Panc1 (cell line): ENCODE measurements at regions of chr10 and their contacts with region 1.

Region 1: GRCh38 chr10:123559066-123559822 is 106.9 kb upstream of the GPR26 start:
- DNase-seq: peak; percentile 54
- ATAC-seq: peak; percentile 94
- H3K4me3 ChIP-seq: no peak overlapping the region
- H3K27ac ChIP-seq: no peak overlapping the region
- H3K4me1 ChIP-seq: no peaks in the 10 kb centered on the region
- H3K27me3 ChIP-seq: peaks cover 7% of the 10 kb centered on the region; the same call in 1 of the 2 replicates
- CTCF ChIP-seq: peak; percentile 98

Region 2: GRCh38 chr10:123043409-123043925 is 515.8 kb before region 1 on chr10:
- CTCF ChIA-PET with region 1: interaction called, 3 read pairs
- POLR2A ChIA-PET with region 1: no interaction called
- in situ Hi-C with region 1: no loop called
- intact Hi-C with region 1: loop called (anchors 1 kb)
- DNase-seq: peak; percentile 65
- ATAC-seq: peak; percentile 98
- H3K4me3 ChIP-seq: no peak overlapping the region
- H3K27ac ChIP-seq: no peak overlapping the region
- H3K4me1 ChIP-seq: no peaks in the 10 kb centered on the region
- H3K27me3 ChIP-seq: no peaks in the 10 kb centered on the region
- CTCF ChIP-seq: peak; percentile 93

Region 3: DNA sequence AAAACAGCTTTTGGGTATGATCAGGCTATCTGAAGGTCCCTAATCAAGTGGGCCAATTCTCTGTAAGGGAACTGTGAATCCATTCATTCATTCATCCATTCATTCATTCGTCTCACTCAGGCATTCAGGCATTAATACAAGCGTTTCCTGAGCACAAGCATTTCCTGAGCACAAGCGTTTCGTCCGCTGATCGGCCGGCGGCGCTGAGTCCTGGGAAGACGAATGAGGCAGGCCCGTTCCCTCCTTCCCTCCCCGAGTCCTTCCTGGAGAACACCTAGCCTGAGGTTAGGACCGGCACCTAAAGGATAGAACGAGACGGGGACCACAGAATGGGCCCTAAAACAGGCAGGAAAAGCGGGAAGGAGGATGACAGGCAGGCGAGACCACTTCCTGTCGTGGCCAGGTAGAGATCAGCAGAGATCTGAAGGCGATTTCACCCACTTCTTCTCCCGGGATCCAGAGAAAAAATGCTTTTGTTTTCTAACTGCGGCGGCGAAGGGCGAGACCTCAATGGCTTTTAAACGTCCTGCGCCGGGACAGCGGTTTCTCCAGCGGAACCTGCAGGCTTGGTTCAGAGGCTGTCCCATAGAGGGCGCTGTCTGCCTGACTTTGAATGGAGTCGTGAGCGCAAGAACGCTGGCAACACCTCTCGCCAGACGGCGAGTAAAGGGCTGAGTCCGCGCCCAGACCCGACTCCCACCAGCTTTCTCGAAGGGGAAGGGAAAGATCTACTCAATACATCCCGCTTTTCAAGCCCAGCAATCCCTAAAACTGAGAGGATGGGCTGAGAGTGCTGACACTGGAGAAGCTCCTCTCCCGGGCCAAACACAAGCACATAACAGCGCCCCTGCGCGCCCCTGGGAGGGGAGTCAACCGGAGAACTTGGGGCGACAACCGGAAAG is 426.4 kb before region 1 on chr10:
- CTCF ChIA-PET with region 1: no interaction called
- POLR2A ChIA-PET with region 1: no interaction called
- in situ Hi-C with region 1: no loop called
- intact Hi-C with region 1: loop called (anchors 2 kb)
- DNase-seq: peak; percentile 71
- ATAC-seq: peak; percentile 82
- H3K4me3 ChIP-seq: peak overlapping the region; percentile 34 to 41
- H3K27ac ChIP-seq: 0 out of 2 replicates have a peak overlapping the region, but pooled peaks have one; percentile 17
- H3K4me1 ChIP-seq: peaks cover 11% of the 10 kb centered on the region; the same call in 1 of the 2 replicates
- H3K27me3 ChIP-seq: no peaks in the 10 kb centered on the region; the same call in 1 of the 2 replicates
- CTCF ChIP-seq: peak; percentile 98

Region 4: DNA sequence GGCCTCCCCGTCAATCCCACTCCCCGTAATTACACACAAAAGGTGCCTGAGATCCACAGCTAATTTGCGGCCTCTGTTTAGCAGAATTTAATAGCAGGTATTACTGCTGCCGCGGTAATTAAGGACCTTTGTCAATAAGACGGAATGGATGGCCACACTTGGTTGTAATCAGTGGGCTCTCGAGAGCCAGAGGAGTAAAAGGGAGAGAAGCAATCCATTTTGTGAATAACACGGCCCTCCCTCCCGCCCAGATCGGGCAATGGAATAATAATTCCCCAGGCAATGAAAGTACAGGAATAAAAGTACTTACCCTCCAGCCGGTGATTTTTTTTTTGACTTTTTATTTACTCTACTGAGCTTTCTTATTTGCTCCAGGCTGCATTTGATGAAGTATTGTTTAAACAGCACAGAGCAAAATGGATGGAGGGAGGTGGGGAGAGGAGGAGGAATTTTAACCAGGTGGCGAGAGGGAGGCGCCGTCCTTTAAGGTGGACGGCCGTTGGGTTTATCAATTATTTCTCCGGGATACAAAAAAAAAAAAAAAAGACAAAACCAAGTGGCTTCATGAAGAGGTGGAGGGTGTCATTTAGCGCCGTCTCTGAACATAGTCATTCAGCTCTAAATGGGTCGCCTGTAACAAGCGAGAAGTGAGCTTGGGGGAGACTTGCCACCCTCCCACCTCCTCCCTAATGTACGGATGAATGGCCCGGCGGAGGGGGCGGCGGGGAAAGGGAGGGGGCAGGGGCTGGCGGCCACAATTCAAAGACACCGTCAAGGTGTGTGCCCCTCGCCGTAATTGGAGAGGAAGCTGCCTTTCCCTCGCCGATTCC is 284.7 kb before region 1 on chr10:
- CTCF ChIA-PET with region 1: interaction called, 11 read pairs
- POLR2A ChIA-PET with region 1: no interaction called
- in situ Hi-C with region 1: no loop called
- intact Hi-C with region 1: no loop called
- DNase-seq: no peak
- ATAC-seq: no peak
- H3K4me3 ChIP-seq: no peak overlapping the region
- H3K27ac ChIP-seq: no peak overlapping the region
- H3K4me1 ChIP-seq: no peaks in the 10 kb centered on the region
- H3K27me3 ChIP-seq: no peaks in the 10 kb centered on the region
- CTCF ChIP-seq: no peak

Region 5: GRCh38 chr10:123301077-123301857 is 258.0 kb before region 1 on chr10:
- CTCF ChIA-PET with region 1: no interaction called
- POLR2A ChIA-PET with region 1: no interaction called
- in situ Hi-C with region 1: no loop called
- intact Hi-C with region 1: loop called (anchors 5 kb)
- DNase-seq: peak; percentile 15
- ATAC-seq: peak; percentile 75
- H3K4me3 ChIP-seq: no peak overlapping the region
- H3K27ac ChIP-seq: no peak overlapping the region
- H3K4me1 ChIP-seq: peaks cover 3% of the 10 kb centered on the region; the same call in 1 of the 2 replicates
- H3K27me3 ChIP-seq: no peaks in the 10 kb centered on the region
- CTCF ChIP-seq: no peak

Region 6: DNA sequence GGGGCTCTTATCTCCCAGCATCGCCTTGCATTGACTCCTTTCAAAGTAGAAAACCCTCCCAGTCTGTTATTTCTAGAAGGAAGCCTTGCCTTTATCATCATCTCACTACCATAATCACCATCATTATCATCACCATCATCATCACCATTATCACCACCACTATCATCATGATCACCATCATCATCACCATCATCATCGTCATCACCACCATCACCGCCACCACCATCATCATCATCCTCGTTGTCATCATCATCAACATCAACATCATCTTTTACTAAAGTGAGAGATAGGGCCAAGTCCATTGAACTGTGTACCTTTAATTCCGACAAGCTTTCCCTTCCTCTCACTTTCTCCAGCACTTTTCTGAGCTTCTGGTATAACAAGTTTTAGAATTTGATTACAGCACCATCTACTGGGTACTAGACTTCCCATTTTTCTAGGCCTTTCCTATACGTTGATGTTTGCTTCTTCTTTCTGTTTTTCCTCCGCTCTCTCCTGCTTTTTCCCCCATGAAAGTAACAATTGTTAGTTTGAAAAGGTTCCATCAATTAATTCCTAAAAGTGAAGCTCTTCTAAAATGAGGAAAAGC is 178.7 kb before region 1 on chr10:
- CTCF ChIA-PET with region 1: no interaction called
- POLR2A ChIA-PET with region 1: no interaction called
- in situ Hi-C with region 1: no loop called
- intact Hi-C with region 1: loop called (anchors 10 kb)
- DNase-seq: peak; percentile 39
- ATAC-seq: peak; percentile 80; the same call in 1 of the 2 replicates
- H3K4me3 ChIP-seq: no peak overlapping the region
- H3K27ac ChIP-seq: no peak overlapping the region
- H3K4me1 ChIP-seq: no peaks in the 10 kb centered on the region
- H3K27me3 ChIP-seq: no peaks in the 10 kb centered on the region
- CTCF ChIP-seq: peak; percentile 74

Region 7: GRCh38 chr10:123582084-123582989 is 23.1 kb after region 1 on chr10:
- CTCF ChIA-PET with region 1: no interaction called
- POLR2A ChIA-PET with region 1: no interaction called
- in situ Hi-C with region 1: no loop called
- intact Hi-C with region 1: no loop called
- DNase-seq: peak; percentile 48
- ATAC-seq: peak; percentile 89
- H3K4me3 ChIP-seq: no peak overlapping the region
- H3K27ac ChIP-seq: no peak overlapping the region
- H3K4me1 ChIP-seq: peaks cover 8% of the 10 kb centered on the region
- H3K27me3 ChIP-seq: peaks cover 28% of the 10 kb centered on the region
- CTCF ChIP-seq: peak; percentile 97

Region 8: DNA sequence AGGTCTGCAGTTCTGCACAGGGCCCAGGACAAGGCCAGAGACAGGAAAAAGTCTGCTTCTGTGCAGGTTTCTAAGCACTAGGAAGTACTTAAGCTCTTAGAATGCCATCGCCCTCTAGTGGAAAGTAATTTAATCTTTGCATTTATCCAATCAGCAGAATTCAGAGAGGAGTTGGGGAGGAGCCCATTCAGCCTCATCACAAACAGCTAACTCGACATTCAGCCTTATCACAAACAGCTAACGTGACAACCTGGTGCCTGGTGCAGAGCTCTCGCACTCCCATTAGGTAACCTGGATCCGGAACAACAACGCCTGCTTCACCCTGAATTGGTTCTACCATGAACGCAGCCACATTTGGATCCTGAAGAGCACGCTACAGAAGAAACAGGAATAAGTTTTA is 844.3 kb after region 1 on chr10:
- CTCF ChIA-PET with region 1: no interaction called
- POLR2A ChIA-PET with region 1: interaction called, 11 read pairs
- in situ Hi-C with region 1: no loop called
- intact Hi-C with region 1: no loop called
- DNase-seq: peak; percentile 45
- ATAC-seq: peak; percentile 96
- H3K4me3 ChIP-seq: no peak overlapping the region
- H3K27ac ChIP-seq: no peak overlapping the region
- H3K4me1 ChIP-seq: no peaks in the 10 kb centered on the region
- H3K27me3 ChIP-seq: no peaks in the 10 kb centered on the region
- CTCF ChIP-seq: peak; percentile 90